ENCODE measurements at regions of chr12 and their contacts with region 1.

Region 1: GRCh38 chr12:104286538-104287482 is 16.7 kb upstream of the EID3 start:
- DNase-seq: peak; percentile 87
- ATAC-seq: peak; percentile 91
- H3K4me3 Mint-ChIP-seq: peak overlapping the region; percentile 99
- H3K27ac Mint-ChIP-seq: peak overlapping the region; percentile 100
- H3K4me1 Mint-ChIP-seq: peaks cover 20% of the 10 kb centered on the region
- H3K27me3 Mint-ChIP-seq: peaks cover 4% of the 10 kb centered on the region

Region 2: GRCh38 chr12:103930034-103930786 is 356.6 kb before region 1 on chr12 and contains the start of gene HSP90B1:
- POLR2A ChIA-PET with region 1: interaction called, 11 read pairs
- DNase-seq: peak; percentile 97
- ATAC-seq: peak; percentile 84
- H3K4me3 Mint-ChIP-seq: peak within 1 kb of the TSS; percentile 93
- H3K27ac Mint-ChIP-seq: peak within 1 kb of the TSS; percentile 100
- H3K4me1 Mint-ChIP-seq: peaks cover 47% of the 10 kb centered on the region
- H3K27me3 Mint-ChIP-seq: no peaks in the 10 kb centered on the region
- total RNA-seq, gene HSP90B1: 279 to 304 TPM

Region 3: DNA sequence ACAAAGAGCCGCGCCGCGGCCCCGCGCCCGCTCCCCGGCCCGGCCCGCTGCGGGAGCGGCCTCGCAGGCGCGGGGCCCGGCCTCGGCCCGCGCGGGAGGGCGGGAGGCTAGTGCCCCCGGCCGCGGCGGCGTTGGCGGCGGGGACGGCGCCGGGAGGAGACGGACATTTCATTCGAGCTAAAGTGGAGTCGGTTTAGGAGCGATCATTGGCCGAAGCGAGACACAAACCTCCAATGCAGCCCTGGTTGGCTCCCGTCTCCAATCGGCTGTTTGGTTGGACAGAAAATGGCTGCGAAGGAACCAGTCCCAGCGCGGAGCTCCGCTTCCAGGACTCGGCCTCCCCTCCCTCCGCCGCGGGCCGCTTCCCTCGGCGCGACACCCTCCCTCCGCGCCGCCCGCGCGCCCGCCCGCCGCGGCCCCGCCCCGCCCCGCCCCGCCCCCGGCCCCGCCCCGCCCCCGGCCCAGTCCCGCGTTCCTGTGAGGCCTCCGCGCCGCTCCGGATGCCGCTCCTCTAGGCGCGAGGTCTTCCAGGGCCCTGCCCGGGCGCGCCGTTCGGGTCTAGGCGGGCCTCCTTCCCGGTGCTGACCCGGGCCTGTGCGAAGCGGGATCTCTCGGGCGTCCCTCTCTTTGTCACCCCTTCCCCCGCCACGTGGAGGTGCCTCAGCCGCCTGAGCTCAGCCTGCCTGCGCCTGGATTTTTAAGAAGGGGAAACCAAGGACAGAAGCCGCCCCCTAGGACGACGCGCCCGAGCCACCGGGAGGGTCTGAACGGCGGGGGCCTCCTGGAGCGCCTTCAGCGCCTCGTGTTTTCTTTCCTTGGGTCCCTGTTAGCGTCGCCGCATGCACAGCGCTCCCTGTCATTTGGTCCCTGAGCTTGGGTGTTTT is 148.7 kb before region 1 on chr12 and contains the start of gene NFYB:
- POLR2A ChIA-PET with region 1: interaction called, 28 read pairs
- DNase-seq: peak; percentile 94
- ATAC-seq: peak; percentile 98
- H3K4me3 Mint-ChIP-seq: peak within 1 kb of the TSS; percentile 89
- H3K27ac Mint-ChIP-seq: peak within 1 kb of the TSS; percentile 88
- H3K4me1 Mint-ChIP-seq: peaks cover 14% of the 10 kb centered on the region
- H3K27me3 Mint-ChIP-seq: peaks cover 18% of the 10 kb centered on the region
- total RNA-seq, gene NFYB: 24.8 to 28.5 TPM

Region 4: GRCh38 chr12:104215638-104216297 is 71.0 kb before region 1 on chr12 and contains the start of gene TXNRD1:
- POLR2A ChIA-PET with region 1: interaction called, 27 read pairs
- DNase-seq: peak; percentile 92
- ATAC-seq: peak; percentile 89
- H3K4me3 Mint-ChIP-seq: peak within 1 kb of the TSS; percentile 76
- H3K27ac Mint-ChIP-seq: peak within 1 kb of the TSS; percentile 81
- H3K4me1 Mint-ChIP-seq: peaks cover 23% of the 10 kb centered on the region
- H3K27me3 Mint-ChIP-seq: peaks cover 7% of the 10 kb centered on the region
- total RNA-seq, gene TXNRD1: 89.0 to 89.5 TPM

Region 5: DNA sequence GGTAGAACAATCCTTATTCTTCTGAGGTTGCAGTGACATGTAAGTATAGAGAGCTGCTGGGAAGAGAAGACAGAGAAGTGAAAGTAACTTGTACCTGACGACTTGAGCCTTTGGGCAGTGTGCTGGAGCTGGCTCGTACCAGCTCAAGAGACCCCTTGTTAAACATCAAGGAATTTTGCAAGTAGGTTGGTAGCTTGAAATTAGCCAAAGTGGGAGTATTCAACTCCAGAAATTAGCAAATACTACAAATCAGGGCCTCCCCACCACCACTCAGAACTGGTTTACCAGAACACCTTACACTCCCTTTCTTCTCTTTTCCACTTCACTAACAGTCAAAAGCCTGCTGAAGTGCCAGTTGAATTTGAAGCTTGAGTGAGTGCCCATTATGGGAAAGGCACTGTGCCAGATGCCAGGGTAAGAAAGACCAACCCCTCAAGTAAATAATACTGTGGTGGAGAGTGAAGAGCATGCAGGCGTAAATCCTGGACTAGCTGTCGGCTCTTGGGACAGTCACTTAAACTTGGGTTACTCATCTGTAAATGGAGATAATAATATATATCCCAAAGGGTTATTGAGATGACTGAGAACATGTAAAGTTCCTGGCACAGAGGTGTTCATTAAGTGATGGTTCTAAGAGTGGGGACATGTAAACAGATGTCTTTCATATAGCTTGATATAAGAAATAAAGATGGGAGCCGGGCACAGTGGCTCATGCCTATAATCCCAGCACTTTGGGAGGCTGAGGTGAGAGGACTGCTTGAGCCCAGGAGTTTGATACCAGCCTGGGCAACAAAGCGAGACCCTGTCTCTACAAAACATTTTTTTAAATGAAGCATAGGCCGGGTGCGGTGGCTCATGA is 10.3 kb before region 1 on chr12:
- POLR2A ChIA-PET with region 1: interaction called, 11 read pairs
- DNase-seq: no peak
- ATAC-seq: peak; percentile 65
- H3K4me3 Mint-ChIP-seq: peak overlapping the region; percentile 68
- H3K27ac Mint-ChIP-seq: peak overlapping the region; percentile 72
- H3K4me1 Mint-ChIP-seq: peaks cover 12% of the 10 kb centered on the region
- H3K27me3 Mint-ChIP-seq: peaks cover 2% of the 10 kb centered on the region

Region 6: GRCh38 chr12:104303538-104304151 is 16.8 kb after region 1 on chr12 and contains the start of gene EID3:
- POLR2A ChIA-PET with region 1: interaction called, 57 read pairs
- DNase-seq: peak; percentile 96
- ATAC-seq: peak; percentile 97
- H3K4me3 Mint-ChIP-seq: peak within 1 kb of the TSS; percentile 88
- H3K27ac Mint-ChIP-seq: peak within 1 kb of the TSS; percentile 96
- H3K4me1 Mint-ChIP-seq: peaks cover 48% of the 10 kb centered on the region
- H3K27me3 Mint-ChIP-seq: no peaks in the 10 kb centered on the region
- total RNA-seq, gene EID3: 6.9 to 7.3 TPM

Region 7: DNA sequence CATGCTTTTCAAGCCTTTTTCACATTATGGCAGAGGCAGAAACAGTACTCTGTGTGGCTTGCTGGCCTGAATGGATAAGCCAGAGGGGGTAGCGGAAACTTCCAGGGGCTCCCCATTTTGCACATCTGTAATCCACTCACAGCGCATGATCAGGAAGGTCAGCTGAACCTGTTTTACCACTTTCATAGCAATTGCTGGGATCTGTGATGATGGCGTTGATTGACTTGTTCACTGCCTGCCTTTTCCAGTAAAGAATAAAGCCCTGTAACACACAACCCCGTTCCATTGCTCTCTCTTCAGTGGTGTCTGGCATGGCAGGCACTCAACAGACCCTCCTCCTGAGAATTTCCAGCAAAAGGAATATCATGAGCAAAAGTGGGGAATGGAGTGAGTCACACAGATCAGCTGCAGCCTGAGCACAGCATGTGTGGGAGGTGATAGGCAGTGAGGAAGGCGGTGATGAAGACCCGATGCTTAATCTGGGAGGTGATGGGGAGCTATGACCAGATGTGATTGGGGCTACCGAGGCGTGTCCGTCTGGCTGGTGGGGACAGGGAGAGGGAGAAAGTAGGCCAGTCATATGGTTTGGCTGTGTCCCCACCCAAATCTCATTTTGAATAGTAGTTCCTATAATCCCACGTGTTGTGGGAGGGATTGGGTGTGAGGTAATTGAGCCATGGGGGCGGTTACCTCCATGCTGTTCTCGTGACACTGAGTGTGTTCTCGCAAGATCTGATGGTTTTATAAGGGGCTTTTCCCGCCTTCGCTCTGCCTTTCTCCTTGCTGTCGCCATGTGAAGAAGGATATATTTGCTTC is 125.2 kb after region 1 on chr12:
- POLR2A ChIA-PET with region 1: no interaction called
- DNase-seq: no peak
- ATAC-seq: no peak
- H3K4me3 Mint-ChIP-seq: no peak overlapping the region
- H3K27ac Mint-ChIP-seq: no peak overlapping the region
- H3K4me1 Mint-ChIP-seq: no peaks in the 10 kb centered on the region
- H3K27me3 Mint-ChIP-seq: peaks cover 4% of the 10 kb centered on the region